ENCODE measurements at regions of chr15 and their contacts with region 1.

Region 1: DNA sequence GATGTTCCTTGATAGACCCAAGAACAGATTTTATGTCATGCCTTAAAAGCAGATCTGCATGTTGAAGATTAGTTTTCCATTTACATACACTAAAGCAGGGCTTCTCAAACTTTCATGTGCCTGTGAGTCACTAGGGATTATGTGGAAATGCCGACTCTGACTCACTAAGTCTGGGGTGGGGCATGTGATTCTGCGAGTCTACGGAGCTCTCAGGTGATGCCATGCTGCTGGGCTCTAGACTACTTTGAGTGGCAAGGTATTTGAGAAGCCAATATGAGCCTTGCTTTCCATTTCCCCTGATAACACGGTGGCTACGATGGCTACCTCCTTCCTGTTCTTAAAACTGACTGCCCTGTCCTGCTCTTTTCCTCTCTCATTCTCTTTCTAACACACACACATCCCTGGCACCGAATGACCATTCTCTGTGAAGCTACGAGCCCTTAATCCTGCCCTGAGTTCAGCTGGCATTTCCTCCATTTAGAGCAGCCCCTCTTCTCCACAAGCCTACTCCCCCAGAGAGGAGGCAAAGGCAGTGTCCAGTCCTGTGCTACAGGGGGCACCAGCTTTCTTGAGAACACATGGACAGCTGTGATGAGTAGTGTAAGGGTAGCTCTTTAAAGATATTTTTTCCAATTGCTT is 39.7 kb upstream of the PYGO1 start:
- DNase-seq: peak; percentile 24 to 29
- H3K4me3 ChIP-seq: no peak overlapping the region
- H3K4me1 ChIP-seq: no peaks in the 10 kb centered on the region; the same call in 1 of the 2 replicates
- H3K27me3 ChIP-seq: no peaks in the 10 kb centered on the region

Region 2: DNA sequence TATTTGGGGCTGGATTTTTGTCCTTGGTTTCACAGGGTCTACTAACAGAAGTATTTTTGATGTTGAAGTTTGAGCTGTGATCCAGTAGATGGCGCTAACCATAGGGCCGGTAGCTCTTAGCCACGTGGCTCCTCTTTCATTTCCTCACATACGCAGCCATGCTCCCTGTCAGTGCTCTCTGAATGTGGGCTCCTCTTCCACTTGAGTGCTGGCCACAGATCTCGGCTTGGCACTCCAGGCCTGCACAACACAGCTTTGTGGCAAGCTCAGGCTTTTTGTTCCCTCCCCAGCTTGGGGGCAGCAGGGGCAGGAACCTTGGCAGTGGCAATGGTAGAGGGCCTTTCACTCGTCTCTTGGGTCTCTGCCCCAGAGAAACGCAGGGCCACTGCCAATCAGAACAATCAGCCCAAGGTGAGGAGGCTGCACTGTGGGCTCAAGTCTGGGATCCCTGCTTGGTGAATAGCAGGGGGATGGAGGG is 101.3 kb before region 1 on chr15:
- in situ Hi-C with region 1: loop called (anchors 10 kb)
- DNase-seq: peak; percentile 61 to 75
- H3K4me3 ChIP-seq: no peak overlapping the region
- H3K4me1 ChIP-seq: no peaks in the 10 kb centered on the region; the same call in 1 of the 2 replicates
- H3K27me3 ChIP-seq: 0 out of 2 replicates have a peak, but pooled peaks cover 2% of the 10 kb centered on the region